Thyroid gland (tissue), 4 donors: ENCODE measurements at regions of chr11 and their contacts with region 1.

Region 1: DNA sequence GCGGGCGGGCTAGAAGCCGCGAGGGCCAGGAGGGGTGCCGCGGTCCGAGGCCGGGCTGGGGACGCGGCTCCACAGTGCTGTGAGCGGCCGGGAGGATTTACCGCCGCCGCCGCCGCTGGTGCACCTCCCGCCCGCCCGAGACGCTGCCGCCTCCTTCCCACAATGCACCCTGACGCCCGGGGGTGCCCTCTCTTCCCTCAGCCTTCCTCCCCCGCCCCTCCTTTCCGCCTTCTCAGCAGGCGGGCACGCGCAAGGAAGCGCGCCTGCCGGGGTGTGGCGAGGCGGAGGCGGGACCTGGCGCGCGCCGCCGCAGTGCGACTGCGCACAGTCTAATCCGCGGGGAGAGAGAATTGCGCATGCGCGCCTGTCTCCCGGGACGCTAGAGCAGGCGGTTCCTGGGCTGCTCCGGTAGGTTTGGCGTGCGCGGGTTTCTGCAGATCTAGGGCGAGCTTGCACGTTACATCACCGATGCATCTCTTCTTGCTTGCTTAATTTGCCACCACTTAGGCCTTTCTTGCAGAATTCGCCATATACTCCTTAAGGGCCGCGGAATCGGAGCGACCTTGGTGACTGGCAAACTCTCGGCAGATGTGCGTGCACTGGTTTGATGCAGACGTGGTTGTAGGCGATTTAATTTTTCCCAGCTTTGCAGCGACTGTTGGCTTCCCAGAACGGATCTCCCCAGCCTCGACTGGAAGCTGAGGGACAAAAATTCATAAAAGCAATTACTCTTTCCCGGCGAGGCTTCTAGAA is at the starts of genes GVQW3 and THAP12:
- DNase-seq: peak; percentile 98
- H3K4me3 ChIP-seq: peak within 1 kb of the TSS; percentile 86 to 98 (median 90)
- H3K27ac ChIP-seq: peak within 1 kb of the TSS; percentile 40 to 59 (median 49)
- H3K4me1 ChIP-seq: peaks cover 22 to 24% of the 10 kb centered on the region in 2 donors
- H3K27me3 ChIP-seq: no peaks in the 10 kb centered on the region
- CTCF ChIP-seq: peak in 2 of 6 experiments; percentile 25 to 38
- POLR2A ChIP-seq: peak in 1 of 2 donors; percentile 79
- total RNA-seq, gene GVQW3: 2.8 to 7.2 (median 3.4) TPM
- total RNA-seq, gene THAP12: 36.4 to 61.9 (median 43.9) TPM

Region 2: DNA sequence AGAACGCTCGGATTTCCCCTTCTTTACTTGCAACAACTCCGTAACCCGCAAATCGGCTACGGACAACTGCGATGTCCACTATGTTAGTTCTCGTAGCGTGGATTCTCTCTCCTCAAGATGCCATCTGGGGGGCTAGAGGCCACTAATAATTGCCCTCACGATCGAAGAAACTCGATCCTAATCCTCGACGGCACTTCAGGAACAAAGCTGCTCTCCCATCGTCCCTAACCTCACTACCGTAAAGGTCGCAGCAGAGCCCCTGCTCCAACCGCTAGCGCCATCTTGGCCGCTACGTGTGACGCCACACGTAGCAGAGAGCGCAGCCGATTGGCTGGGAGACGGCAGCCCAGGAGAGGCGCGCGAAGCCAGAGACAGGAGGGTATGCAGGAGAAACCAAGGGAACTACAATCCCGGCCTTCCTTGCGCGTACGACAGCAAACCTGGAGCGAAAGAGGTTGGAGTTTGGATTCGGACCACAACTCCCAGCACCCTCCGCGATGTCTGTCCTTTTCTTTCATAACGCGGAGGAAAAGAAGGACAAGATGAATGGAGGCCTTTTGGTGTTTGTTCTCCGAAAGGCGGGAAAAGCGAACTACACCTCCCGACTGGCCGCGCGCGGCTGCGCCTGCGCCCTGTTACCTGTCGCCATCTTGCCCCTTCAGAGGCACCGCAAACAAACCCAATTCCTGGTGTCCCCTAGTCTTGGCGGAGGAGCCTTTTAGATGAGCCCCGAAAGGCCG is 63.4 kb after region 1 on chr11 and contains the start of gene EMSY:
- intact Hi-C with region 1: loop called (anchors 2 kb)
- DNase-seq: peak; percentile 97
- H3K4me3 ChIP-seq: peak within 1 kb of the TSS; percentile 68 to 98 (median 96)
- H3K27ac ChIP-seq: peak within 1 kb of the TSS; percentile 52 to 89 (median 86)
- H3K4me1 ChIP-seq: peaks cover 11 to 14% of the 10 kb centered on the region in 2 donors
- H3K27me3 ChIP-seq: no peaks in the 10 kb centered on the region
- CTCF ChIP-seq: no peak
- POLR2A ChIP-seq: peak; percentile 67 to 97
- total RNA-seq, gene EMSY: 32.7 to 58.0 (median 46.4) TPM